Activated naive CD4-positive, alpha-beta T cell treated with anti-CD3 and anti-CD28 coated beads for 36 hours (primary cell): ENCODE measurements at regions of chr3 and their contacts with region 1.

Region 1: GRCh38 chr3:61381745-61382392 is 130.6 kb upstream of the FHIT start:
- DNase-seq: no peak
- H3K4me3 Mint-ChIP-seq: no peak overlapping the region
- H3K27ac Mint-ChIP-seq: no peak overlapping the region
- H3K4me1 Mint-ChIP-seq: peaks cover 2% of the 10 kb centered on the region
- H3K27me3 Mint-ChIP-seq: peaks cover 18% of the 10 kb centered on the region

Region 2: DNA sequence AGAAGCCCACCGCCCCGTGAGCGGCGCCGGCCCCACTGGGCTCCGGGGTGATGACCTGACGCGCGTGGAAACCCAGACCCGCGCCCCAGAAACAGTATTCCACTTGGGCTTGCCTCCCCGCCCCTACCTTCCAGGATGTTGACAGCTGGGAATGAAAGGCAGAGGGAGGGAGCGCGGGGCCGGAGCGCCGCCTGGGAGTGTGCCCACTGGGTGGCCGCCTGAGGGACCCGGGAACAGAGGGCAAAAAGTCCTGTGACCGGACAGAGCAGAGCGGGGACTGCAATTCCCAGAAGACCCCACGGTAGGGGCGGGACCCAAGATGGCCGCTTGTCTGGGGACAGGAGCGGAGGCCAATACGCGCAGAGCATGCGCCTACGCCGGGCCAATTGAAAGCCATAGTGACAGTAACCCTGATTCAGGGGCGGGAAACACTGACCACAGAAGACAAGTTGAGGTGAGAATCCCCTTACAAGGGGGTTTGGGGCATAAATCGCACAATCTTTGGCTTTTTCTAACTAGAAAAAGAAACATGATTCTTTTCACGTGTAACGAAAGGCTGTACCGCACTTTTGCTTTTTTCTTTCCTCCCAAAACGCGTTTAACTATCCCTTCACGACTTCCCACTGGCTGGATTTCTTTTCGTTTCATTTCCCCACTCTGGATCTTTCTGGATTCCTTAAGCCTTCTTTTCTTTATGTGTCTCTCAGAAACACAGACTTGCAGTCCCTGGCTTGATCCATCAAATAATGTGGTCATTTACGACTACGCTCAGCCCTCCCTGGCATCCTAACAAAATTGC is 130.5 kb before region 1 on chr3 and contains the start of gene FHIT:
- CTCF ChIA-PET with region 1: no interaction called
- intact Hi-C with region 1: loop called (anchors 5 kb)
- DNase-seq: peak; percentile 96
- H3K4me3 Mint-ChIP-seq: peak within 1 kb of the TSS; percentile 91
- H3K27ac Mint-ChIP-seq: peak within 1 kb of the TSS; percentile 87
- H3K4me1 Mint-ChIP-seq: peaks cover 11% of the 10 kb centered on the region
- H3K27me3 Mint-ChIP-seq: peaks cover under 1% of the 10 kb centered on the region
- total RNA-seq, gene FHIT: 20.2 to 22.7 TPM

Region 3: GRCh38 chr3:61530355-61530754 is 148.5 kb after region 1 on chr3:
- CTCF ChIA-PET with region 1: interaction called, 10 read pairs
- intact Hi-C with region 1: no loop called
- DNase-seq: peak; percentile 32
- H3K4me3 Mint-ChIP-seq: no peak overlapping the region
- H3K27ac Mint-ChIP-seq: no peak overlapping the region
- H3K4me1 Mint-ChIP-seq: no peaks in the 10 kb centered on the region
- H3K27me3 Mint-ChIP-seq: no peaks in the 10 kb centered on the region

Region 4: DNA sequence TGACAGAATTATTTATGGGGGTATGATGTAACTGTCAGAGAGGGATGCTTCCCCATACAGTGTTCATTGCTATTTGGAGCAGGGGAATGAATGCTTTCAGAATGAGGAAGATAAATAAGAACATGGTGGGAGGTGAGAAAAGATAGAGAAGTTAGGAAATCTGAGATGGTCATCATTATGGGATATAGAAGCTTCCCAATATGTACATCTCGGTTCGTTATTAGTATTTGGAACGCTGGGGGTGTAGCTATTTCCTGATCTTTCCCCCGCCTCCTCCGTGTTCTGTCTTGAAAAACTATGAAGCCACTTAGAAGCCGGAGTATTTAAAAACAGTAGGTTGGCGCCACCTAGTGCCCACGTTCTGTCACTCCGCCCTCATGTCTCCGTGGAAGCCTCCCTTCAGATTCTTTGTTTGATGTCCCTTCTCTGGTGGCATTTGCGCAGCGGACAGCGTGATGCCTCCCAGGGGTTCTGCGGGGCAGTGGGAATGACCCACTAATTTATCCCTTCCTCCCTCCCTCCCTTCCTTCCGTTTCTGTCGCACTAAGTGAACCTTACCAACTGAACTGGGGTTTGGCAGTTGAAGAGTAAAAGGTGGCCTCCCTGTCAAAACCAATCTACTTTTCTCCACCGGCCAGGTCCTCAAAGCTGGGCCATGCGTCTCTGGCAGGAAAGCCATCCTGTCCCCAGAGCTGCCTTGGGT is 807.0 kb after region 1 on chr3:
- CTCF ChIA-PET with region 1: no interaction called
- intact Hi-C with region 1: loop called (anchors 5 kb)
- DNase-seq: peak; percentile 81
- H3K4me3 Mint-ChIP-seq: no peak overlapping the region
- H3K27ac Mint-ChIP-seq: no peak overlapping the region
- H3K4me1 Mint-ChIP-seq: peaks cover 3% of the 10 kb centered on the region
- H3K27me3 Mint-ChIP-seq: no peaks in the 10 kb centered on the region